Natural killer cell (primary cell): ENCODE measurements at regions of chr9 and their contacts with region 1.

Region 1: GRCh38 chr9:128361986-128362646 is 9.1 kb upstream of the URM1 start:
- DNase-seq: peak; percentile 51 to 81
- ATAC-seq: peak; percentile 87 to 98 (median 96)
- H3K4me3 ChIP-seq: peak overlapping the region; percentile 38
- H3K4me3 Mint-ChIP-seq: peak overlapping the region; percentile 80
- H3K27ac ChIP-seq: no peak overlapping the region
- H3K27ac Mint-ChIP-seq: peak overlapping the region in 1 of 2 donors; percentile 49
- H3K4me1 ChIP-seq: peaks cover 18% of the 10 kb centered on the region
- H3K4me1 Mint-ChIP-seq: peaks cover 7 to 8% of the 10 kb centered on the region in 2 donors
- H3K27me3 ChIP-seq: no peaks in the 10 kb centered on the region
- H3K27me3 Mint-ChIP-seq: peaks cover 0 to 9% of the 10 kb centered on the region in 2 donors
- CTCF ChIP-seq: peak; percentile 81

Region 2: GRCh38 chr9:128412120-128412790 is 50.1 kb after region 1 on chr9:
- intact Hi-C with region 1: loop called (anchors 1 kb)
- DNase-seq: peak; percentile 39 to 63
- ATAC-seq: peak in 2 of 3 donors; percentile 46 to 69
- H3K4me3 ChIP-seq: no peak overlapping the region
- H3K4me3 Mint-ChIP-seq: no peak overlapping the region
- H3K27ac ChIP-seq: no peak overlapping the region
- H3K27ac Mint-ChIP-seq: no peak overlapping the region
- H3K4me1 ChIP-seq: no peaks in the 10 kb centered on the region
- H3K4me1 Mint-ChIP-seq: peaks cover 0 to 10% of the 10 kb centered on the region in 2 donors
- H3K27me3 ChIP-seq: peaks cover 2% of the 10 kb centered on the region
- H3K27me3 Mint-ChIP-seq: peaks cover 30 to 35% of the 10 kb centered on the region in 2 donors
- CTCF ChIP-seq: peak; percentile 33